Mammary epithelial cell (primary cell): ENCODE measurements at regions of chr17 and their contacts with region 1.

Region 1: DNA sequence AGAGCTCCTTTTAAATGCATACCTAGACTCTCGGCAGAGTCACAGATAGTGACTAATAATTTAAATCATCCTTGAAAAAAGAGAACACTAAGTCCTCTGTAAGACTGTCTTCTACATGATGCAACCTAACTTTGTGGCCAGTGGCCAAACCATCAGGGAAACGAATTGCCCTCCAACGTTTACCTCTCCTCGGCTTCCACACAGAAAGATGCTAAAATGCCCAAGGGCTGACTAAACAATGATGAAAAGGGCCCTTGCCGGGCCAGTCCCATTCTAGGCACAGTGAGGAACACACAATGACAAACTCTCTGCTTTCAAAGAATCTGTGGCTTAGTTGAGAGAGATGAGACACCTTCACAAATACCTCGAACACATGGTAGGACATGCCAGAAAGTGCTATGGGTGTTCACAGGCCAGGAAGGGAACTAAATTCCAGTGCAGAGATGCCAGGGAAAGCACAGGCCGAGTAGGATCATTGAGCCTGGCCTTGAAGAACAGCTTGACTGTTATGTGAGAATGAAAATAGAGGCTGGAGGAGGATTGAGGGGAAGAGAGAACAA is 35.3 kb upstream of the PITPNM3 start:
- DNase-seq: peak; percentile 98
- H3K4me3 ChIP-seq: no peak overlapping the region
- H3K27ac ChIP-seq: peak overlapping the region; percentile 71
- H3K4me1 ChIP-seq: peaks cover 23% of the 10 kb centered on the region
- H3K27me3 ChIP-seq: no peaks in the 10 kb centered on the region
- CTCF ChIP-seq: no peak

Region 2: GRCh38 chr17:6555331-6556120 is 36.2 kb before region 1 on chr17:
- CTCF ChIA-PET with region 1: no interaction called
- dilution Hi-C with region 1: no loop called
- in situ Hi-C with region 1: no loop called
- intact Hi-C with region 1: loop called (anchors 2 kb)
- DNase-seq: peak; percentile 76
- H3K4me3 ChIP-seq: peak overlapping the region; percentile 65 to 75 (median 67)
- H3K27ac ChIP-seq: peak overlapping the region; percentile 42
- H3K4me1 ChIP-seq: peaks cover 36% of the 10 kb centered on the region
- H3K27me3 ChIP-seq: no peaks in the 10 kb centered on the region
- CTCF ChIP-seq: peak in 1 of 2 donors; percentile 11

Region 3: GRCh38 chr17:6567529-6568183 is 24.0 kb before region 1 on chr17:
- CTCF ChIA-PET with region 1: no interaction called
- dilution Hi-C with region 1: no loop called
- in situ Hi-C with region 1: no loop called
- intact Hi-C with region 1: loop called (anchors 1 kb)
- DNase-seq: peak; percentile 91
- H3K4me3 ChIP-seq: peak overlapping the region in 2 of 3 experiments; percentile 27 to 43
- H3K27ac ChIP-seq: peak overlapping the region; percentile 62
- H3K4me1 ChIP-seq: peaks cover 16% of the 10 kb centered on the region
- H3K27me3 ChIP-seq: no peaks in the 10 kb centered on the region
- CTCF ChIP-seq: peak in 1 of 2 donors; percentile 46

Region 4: DNA sequence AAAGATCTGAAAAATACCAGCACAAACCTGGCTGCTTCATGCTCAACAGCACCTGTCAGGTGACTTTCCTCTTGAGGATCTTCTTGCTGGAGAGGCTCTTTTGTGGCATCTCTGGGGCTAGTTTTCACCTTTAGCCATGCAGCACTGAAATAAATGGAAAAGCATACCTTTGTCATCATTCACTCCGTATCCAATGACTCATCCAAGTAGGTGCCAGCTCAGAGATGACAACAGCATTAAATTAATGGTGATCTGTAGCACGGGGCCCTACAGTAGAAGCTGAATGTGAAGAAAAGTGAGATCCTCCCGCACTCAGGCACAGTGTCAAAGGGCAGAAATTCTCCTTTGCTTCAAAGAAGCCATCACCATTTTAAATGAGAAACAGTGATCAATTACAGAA is 16.6 kb after region 1 on chr17:
- CTCF ChIA-PET with region 1: interaction called, 3 read pairs
- dilution Hi-C with region 1: no loop called
- in situ Hi-C with region 1: no loop called
- intact Hi-C with region 1: loop called (anchors 1 kb)
- DNase-seq: peak; percentile 70
- H3K4me3 ChIP-seq: no peak overlapping the region
- H3K27ac ChIP-seq: peak overlapping the region; percentile 40
- H3K4me1 ChIP-seq: peaks cover 9% of the 10 kb centered on the region
- H3K27me3 ChIP-seq: no peaks in the 10 kb centered on the region
- CTCF ChIP-seq: no peak

Region 5: GRCh38 chr17:6640536-6641373 is 49.1 kb after region 1 on chr17 and contains the starts of genes KIAA0753 and TXNDC17:
- CTCF ChIA-PET with region 1: no interaction called
- dilution Hi-C with region 1: no loop called
- in situ Hi-C with region 1: no loop called
- intact Hi-C with region 1: loop called (anchors 2 kb)
- DNase-seq: peak; percentile 89
- H3K4me3 ChIP-seq: peak within 1 kb of the TSS; percentile 66 to 97 (median 79)
- H3K27ac ChIP-seq: peak within 1 kb of the TSS; percentile 87
- H3K4me1 ChIP-seq: peaks cover 43% of the 10 kb centered on the region
- H3K27me3 ChIP-seq: no peaks in the 10 kb centered on the region
- CTCF ChIP-seq: no peak
- total RNA-seq, gene KIAA0753: 23.2 to 25.2 TPM
- total RNA-seq, gene TXNDC17: 315 to 319 TPM